ENCODE measurements at regions of chr2 and their contacts with region 1.

Region 1: DNA sequence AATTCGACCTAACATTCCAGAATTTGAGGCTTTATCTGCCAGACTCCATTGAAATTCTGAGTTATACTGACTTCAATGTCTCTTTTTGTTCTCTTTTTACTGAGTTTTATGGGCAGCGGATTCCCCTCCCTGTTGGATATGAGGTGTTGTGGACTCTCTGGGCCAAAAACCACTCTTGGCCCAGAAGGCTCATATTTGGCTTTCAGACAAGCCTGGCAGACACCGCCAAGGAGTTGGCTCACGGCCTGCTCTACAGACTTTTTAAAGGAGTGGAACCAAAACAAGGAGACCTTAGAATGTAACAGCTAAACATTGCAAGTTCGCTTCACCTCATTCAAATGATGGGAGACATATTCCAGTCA is 206.4 kb upstream of the NCKAP5 start:
- DNase-seq: peak; percentile 67
- ATAC-seq: peak; percentile 72

Region 2: GRCh38 chr2:132515010-132515409 is 1259.6 kb before region 1 on chr2:
- intact Hi-C with region 1: no loop called
- DNase-seq: no peak
- ATAC-seq: no peak

Region 3: GRCh38 chr2:133568172-133568571 is 206.5 kb before region 1 on chr2 and contains the start of gene NCKAP5:
- intact Hi-C with region 1: loop called (anchors 5 kb)
- DNase-seq: peak; percentile 37
- ATAC-seq: peak; percentile 57
- total RNA-seq, gene NCKAP5: 2.8 TPM

Region 4: DNA sequence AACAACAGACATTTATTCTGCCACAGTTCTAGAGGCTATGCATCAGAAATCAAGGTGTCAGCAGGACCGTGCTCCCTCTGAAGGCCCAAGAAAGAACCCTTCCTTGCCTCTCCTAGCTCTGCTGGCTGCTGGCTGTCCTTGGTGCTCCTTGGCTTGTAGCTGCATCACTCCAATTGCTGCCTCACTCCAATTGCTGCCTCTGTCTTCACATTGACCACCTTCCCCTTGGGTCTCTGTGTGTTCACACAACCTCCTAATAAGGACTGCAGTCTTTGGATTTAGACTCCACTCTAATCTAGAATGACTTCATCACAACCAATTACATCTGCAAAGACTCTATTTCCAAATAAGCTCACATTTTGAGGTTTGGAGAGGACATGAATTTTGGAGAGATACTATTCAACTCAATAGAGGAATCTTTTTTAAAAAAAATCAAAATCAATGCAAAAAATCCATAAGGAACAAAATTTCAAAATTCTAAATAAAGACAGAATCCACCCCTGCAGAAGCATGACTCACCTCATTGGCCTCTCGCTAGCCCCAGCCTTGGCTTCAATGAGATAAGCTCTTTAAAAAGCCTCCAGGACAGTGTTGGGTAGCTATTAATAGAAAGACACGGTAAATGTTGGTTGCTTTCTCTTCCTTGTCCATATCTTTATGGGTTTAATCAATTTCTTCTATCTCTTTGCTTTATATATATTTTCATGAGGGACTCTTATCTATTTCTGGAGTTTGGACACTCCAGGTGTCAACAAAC is 211.6 kb after region 1 on chr2:
- intact Hi-C with region 1: no loop called
- DNase-seq: no peak
- ATAC-seq: peak; percentile 92